MCF 10A (cell line): ENCODE measurements at regions of chr7 and their contacts with region 1.

Region 1: DNA sequence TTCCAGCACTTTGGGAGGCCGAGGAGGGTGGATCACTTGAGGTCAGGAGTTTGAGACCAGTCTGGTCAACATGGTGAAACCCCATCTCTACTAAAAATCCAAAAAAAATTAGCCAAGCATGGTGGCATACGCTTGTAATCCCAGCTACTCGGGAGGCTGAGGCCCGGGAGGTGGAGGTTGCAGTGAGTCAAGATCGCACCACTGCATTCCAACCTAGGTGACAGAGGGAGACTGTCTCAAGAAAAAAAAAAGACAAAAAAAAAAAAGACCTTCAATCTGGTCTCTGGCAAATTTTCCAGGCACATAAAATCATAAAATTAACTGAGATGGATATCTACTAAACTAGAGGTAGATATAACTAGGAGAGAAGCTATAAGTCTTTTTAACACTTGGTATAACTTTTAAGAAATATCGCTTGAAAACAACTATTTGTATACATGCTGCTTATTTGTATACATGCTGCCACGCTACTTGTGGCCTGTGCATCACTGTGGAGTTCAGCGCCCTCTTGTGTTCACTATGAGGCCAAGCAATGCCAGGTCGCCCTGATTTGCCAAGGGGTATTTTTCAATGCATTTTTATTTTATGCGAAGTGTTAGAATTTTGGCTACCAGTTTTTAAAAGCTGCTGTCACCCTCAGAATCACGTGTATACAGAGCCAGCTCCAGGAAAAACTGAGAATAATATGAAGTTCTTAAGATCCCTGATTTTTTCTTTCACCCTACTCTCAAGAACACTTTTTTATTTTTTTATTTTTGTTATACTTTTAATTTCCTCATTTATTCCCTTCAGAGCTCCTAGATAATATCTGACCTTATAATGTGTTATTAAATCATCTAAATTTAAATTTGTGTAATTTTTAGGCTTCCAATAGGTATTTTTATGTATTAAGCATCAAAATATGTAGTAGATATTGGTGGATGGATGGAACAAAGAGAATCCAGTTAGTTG is 26.7 kb downstream of the CYCS start:
- DNase-seq: peak; percentile 72
- H3K4me3 Mint-ChIP-seq: no peak overlapping the region
- H3K27ac Mint-ChIP-seq: no peak overlapping the region
- H3K4me1 Mint-ChIP-seq: peaks cover 3% of the 10 kb centered on the region
- H3K27me3 Mint-ChIP-seq: no peaks in the 10 kb centered on the region
- CTCF ChIP-seq: peak; percentile 77

Region 2: DNA sequence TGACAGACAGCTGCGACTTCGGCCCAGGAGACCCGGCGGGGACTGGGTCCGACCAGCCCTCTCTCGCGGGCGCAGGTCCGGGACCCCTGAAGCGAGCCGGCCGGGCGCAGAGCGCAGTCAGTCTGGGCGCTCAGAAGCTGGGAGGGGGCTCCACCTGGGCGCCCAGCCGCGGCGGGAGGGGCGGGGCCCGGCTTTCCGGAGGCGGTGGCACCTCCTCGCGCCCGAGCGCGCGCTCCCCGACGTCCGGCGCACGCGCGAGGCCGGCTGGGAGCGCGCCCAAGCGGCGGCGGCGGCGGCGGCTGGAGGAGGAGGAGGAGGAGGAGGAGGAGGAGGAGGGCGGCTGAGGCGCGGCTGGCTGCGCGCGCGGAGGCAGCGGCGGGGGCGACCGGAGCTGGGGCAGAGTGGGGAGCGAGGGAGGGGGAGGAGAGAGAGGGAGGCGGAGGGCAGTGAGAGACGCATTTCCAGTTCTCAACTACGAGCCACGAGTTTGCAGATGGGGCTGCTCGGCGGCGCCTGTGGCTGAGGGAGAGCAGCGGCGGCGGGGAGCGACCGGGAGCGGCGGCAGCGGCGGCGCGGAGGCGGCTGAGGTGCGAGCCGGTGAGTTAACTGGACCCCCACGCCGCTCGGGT is 525.3 kb before region 1 on chr7 and contains the start of gene PALS2:
- CTCF ChIA-PET with region 1: interaction called, 18 read pairs
- POLR2A ChIA-PET with region 1: interaction called, 4 read pairs
- intact Hi-C with region 1: loop called (anchors 2 kb)
- DNase-seq: peak; percentile 73
- H3K4me3 Mint-ChIP-seq: peak within 1 kb of the TSS; percentile 99
- H3K27ac Mint-ChIP-seq: peak within 1 kb of the TSS; percentile 95
- H3K4me1 Mint-ChIP-seq: peaks cover 19% of the 10 kb centered on the region
- H3K27me3 Mint-ChIP-seq: peaks cover 28% of the 10 kb centered on the region
- CTCF ChIP-seq: no peak
- total RNA-seq, gene PALS2: 36.3 and 45.9 TPM in 2 replicates

Region 3: DNA sequence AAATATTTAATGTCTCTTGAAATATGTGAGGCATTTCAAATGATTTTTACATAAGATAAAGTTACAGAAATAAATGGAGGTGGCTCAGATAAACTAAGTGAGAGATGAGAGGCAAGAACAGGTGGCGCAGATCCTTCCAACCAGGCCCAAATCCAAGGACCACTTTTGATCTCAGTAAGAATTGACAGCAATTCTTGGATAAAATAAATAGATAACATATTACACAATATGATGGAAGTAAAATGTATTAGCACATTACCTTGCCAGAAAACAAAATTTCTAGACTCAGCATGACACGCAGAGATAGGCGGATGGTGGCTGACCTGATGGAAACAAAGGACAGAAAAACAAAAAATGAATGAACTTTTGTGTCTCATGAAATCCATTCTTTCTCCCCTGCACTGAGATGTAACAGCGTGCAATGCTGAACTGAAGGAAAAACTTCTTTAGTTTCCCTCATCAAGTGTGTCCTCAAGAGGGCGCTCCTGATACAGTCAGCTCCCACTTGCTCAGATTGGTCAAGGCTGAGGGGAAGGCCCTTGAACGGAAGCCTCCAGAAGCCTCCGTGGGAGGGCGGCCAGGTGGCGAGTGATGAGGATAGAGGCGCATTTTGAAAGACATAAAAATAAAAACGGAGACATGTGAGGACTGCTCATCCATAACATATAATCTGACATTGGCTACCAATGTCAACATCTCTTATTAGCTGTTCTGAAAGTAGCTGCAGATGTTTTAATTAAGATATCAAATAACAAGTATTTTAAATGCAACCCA is 278.3 kb before region 1 on chr7:
- CTCF ChIA-PET with region 1: interaction called, 186 read pairs
- POLR2A ChIA-PET with region 1: interaction called, 12 read pairs
- intact Hi-C with region 1: loop called (anchors 1 kb)
- DNase-seq: peak; percentile 93
- H3K4me3 Mint-ChIP-seq: peak overlapping the region; percentile 66
- H3K27ac Mint-ChIP-seq: peak overlapping the region; percentile 99
- H3K4me1 Mint-ChIP-seq: peaks cover 39% of the 10 kb centered on the region
- H3K27me3 Mint-ChIP-seq: no peaks in the 10 kb centered on the region
- CTCF ChIP-seq: peak; percentile 77

Region 4: GRCh38 chr7:25075459-25075858 is 22.9 kb before region 1 on chr7:
- CTCF ChIA-PET with region 1: interaction called, 16 read pairs
- POLR2A ChIA-PET with region 1: interaction called, 3 read pairs
- intact Hi-C with region 1: no loop called
- DNase-seq: no peak
- H3K4me3 Mint-ChIP-seq: no peak overlapping the region
- H3K27ac Mint-ChIP-seq: no peak overlapping the region
- H3K4me1 Mint-ChIP-seq: no peaks in the 10 kb centered on the region
- H3K27me3 Mint-ChIP-seq: no peaks in the 10 kb centered on the region
- CTCF ChIP-seq: no peak

Region 5: DNA sequence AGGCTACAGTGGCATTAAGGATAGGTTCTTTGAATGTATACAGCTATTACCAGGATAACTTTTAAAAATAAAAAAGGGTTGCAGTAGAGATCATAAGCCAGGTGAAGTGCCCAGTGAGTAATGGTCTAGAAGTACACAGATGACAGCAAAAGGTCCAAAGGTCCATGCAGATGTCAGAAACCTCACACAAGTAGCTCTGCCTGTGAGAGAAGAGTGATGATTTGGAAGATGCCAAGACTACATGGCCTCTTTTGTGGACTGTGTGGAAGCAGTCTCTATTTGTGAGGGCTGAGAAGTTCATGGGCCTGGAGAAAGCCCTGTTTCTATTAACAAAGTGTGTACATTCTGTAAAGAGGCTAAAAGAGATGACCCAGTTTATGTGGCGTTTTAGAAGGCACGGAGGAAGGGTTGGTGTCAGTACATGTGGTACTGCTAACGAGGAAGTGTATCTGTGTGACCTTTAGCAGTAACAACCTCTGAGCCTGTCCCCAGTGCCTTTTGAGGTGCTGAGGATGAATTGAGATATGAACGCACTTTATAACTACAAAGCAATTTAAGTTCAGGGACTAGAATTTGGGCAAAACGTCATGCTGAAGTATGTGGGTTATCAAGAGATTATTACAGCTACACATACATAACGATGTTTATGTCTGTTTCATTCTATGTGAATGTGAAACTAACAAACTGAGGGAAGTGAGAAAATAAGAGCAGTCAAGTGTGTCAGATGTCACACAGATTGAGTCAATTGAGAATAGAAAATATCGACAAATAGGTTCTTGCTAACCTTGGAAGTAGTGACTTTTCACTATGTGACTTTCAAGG is 19.1 kb after region 1 on chr7:
- CTCF ChIA-PET with region 1: interaction called, 23 read pairs
- POLR2A ChIA-PET with region 1: interaction called, 4 read pairs
- intact Hi-C with region 1: no loop called
- DNase-seq: no peak
- H3K4me3 Mint-ChIP-seq: no peak overlapping the region
- H3K27ac Mint-ChIP-seq: no peak overlapping the region
- H3K4me1 Mint-ChIP-seq: peaks cover 23% of the 10 kb centered on the region
- H3K27me3 Mint-ChIP-seq: no peaks in the 10 kb centered on the region
- CTCF ChIP-seq: no peak

Region 6: DNA sequence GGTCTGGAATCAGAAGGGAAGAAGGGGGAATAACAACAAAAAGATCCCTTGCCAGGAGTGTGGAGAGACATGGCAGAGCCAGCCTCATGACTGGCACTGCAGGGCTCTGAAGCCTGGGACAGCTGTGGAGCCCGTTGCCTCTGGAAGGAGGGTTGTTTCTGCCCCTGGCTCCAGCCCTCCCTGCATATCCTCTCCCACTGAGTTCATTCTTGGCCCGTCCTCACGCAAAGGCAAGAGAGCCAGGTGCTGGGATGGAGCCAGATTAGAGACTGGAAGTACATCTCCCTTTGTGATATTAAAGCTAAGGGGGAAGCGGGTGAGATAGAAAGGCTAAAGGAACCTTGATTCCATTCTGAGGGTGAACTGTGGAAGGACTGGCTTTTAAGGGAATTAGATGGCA is 271.4 kb after region 1 on chr7:
- CTCF ChIA-PET with region 1: no interaction called
- POLR2A ChIA-PET with region 1: no interaction called
- intact Hi-C with region 1: no loop called
- DNase-seq: no peak
- H3K4me3 Mint-ChIP-seq: no peak overlapping the region
- H3K27ac Mint-ChIP-seq: no peak overlapping the region
- H3K4me1 Mint-ChIP-seq: no peaks in the 10 kb centered on the region
- H3K27me3 Mint-ChIP-seq: peaks cover 76% of the 10 kb centered on the region
- CTCF ChIP-seq: no peak